ENCODE measurements at regions of chr5 and their contacts with region 1.

Region 1: GRCh38 chr5:142699184-142699720 is 13.4 kb upstream of the FGF1 start:
- DNase-seq: peak; percentile 60 to 74 (median 66)
- H3K4me3 ChIP-seq: no peak overlapping the region
- H3K4me3 Mint-ChIP-seq: no peak overlapping the region
- H3K27ac ChIP-seq: no peak overlapping the region
- H3K27ac Mint-ChIP-seq: no peak overlapping the region
- H3K4me1 ChIP-seq: no peaks in the 10 kb centered on the region
- H3K4me1 Mint-ChIP-seq: peaks cover 2% of the 10 kb centered on the region
- H3K27me3 ChIP-seq: no peaks in the 10 kb centered on the region
- H3K27me3 Mint-ChIP-seq: peaks cover 0 to 14% (median 2%) of the 10 kb centered on the region in 3 donors
- CTCF ChIP-seq: peak; percentile 90

Region 2: DNA sequence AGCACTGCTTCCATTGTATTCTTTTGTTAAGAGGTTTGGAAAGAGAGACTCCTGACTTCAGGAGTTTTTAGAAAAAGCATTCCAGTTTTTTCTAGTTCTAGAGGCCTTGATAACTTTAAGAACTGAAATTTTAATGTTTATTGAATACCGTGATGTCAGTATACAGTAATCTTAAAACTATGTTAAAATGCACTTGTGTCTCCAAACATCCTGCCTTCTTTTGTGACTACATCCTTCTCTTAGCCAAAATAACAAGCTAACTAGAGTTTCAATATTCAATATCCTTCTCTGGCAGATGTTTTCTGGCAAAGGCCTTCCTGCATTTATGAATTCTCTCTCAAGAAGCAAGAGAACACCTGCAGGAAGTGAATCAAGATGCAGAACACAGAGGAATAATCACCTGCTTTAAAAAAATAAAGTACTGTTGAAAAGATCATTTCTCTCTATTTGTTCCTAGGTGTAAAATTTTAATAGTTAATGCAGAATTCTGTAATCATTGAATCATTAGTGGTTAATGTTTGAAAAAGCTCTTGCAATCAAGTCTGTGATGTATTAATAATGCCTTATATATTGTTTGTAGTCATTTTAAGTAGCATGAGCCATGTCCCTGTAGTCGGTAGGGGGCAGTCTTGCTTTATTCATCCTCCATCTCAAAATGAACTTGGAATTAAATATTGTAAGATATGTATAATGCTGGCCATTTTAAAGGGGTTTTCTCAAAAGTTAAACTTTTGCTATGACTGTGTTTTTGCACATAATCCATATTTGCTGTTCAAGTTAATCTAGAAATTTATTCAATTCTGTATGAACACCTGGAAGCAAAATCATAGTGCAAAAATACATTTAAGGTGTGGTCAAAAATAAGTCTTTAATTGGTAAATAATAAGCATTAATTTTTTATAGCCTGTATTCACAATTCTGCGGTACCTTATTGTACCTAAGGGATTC is 547.5 kb before region 1 on chr5:
- intact Hi-C with region 1: loop called (anchors 10 kb)
- DNase-seq: peak; percentile 27 to 48 (median 42)
- H3K4me3 ChIP-seq: no peak overlapping the region
- H3K4me3 Mint-ChIP-seq: no peak overlapping the region
- H3K27ac ChIP-seq: no peak overlapping the region
- H3K27ac Mint-ChIP-seq: no peak overlapping the region
- H3K4me1 ChIP-seq: no peaks in the 10 kb centered on the region
- H3K4me1 Mint-ChIP-seq: no peaks in the 10 kb centered on the region
- H3K27me3 ChIP-seq: no peaks in the 10 kb centered on the region
- H3K27me3 Mint-ChIP-seq: no peaks in the 10 kb centered on the region
- CTCF ChIP-seq: peak; percentile 86

Region 3: GRCh38 chr5:142611154-142611553 is 88.1 kb before region 1 on chr5:
- intact Hi-C with region 1: loop called in 1 of 2 experiments (anchors 5 kb)
- DNase-seq: peak in 2 of 3 donors; percentile 8 to 23
- H3K4me3 ChIP-seq: no peak overlapping the region
- H3K4me3 Mint-ChIP-seq: no peak overlapping the region
- H3K27ac ChIP-seq: no peak overlapping the region
- H3K27ac Mint-ChIP-seq: no peak overlapping the region
- H3K4me1 ChIP-seq: no peaks in the 10 kb centered on the region
- H3K4me1 Mint-ChIP-seq: no peaks in the 10 kb centered on the region
- H3K27me3 ChIP-seq: peaks cover 0 to 4% of the 10 kb centered on the region in 2 donors
- H3K27me3 Mint-ChIP-seq: peaks cover 9 to 23% (median 17%) of the 10 kb centered on the region in 3 donors
- CTCF ChIP-seq: peak; percentile 82

Region 4: GRCh38 chr5:142655339-142656267 is 43.6 kb before region 1 on chr5:
- intact Hi-C with region 1: loop called in 1 of 2 experiments (anchors 5 kb)
- DNase-seq: peak; percentile 33 to 57 (median 51)
- H3K4me3 ChIP-seq: no peak overlapping the region
- H3K4me3 Mint-ChIP-seq: no peak overlapping the region
- H3K27ac ChIP-seq: no peak overlapping the region
- H3K27ac Mint-ChIP-seq: no peak overlapping the region
- H3K4me1 ChIP-seq: no peaks in the 10 kb centered on the region
- H3K4me1 Mint-ChIP-seq: no peaks in the 10 kb centered on the region
- H3K27me3 ChIP-seq: peaks cover 3 to 10% of the 10 kb centered on the region in 2 donors
- H3K27me3 Mint-ChIP-seq: peaks cover 6 to 18% (median 15%) of the 10 kb centered on the region in 3 donors
- CTCF ChIP-seq: peak; percentile 98

Region 5: GRCh38 chr5:142713121-142713706 is 14.0 kb after region 1 on chr5:
- intact Hi-C with region 1: no loop called
- DNase-seq: peak; percentile 80 to 83 (median 81)
- H3K4me3 ChIP-seq: peak overlapping the region; percentile 36 to 75 (median 71)
- H3K4me3 Mint-ChIP-seq: peak overlapping the region; percentile 78 to 82
- H3K27ac ChIP-seq: peak overlapping the region in 1 of 2 donors; percentile 39
- H3K27ac Mint-ChIP-seq: peak overlapping the region in 6 of 7 donors; percentile 10 to 86 (median 74)
- H3K4me1 ChIP-seq: peaks cover 6 to 17% of the 10 kb centered on the region in 2 donors
- H3K4me1 Mint-ChIP-seq: peaks cover 17% of the 10 kb centered on the region
- H3K27me3 ChIP-seq: no peaks in the 10 kb centered on the region
- H3K27me3 Mint-ChIP-seq: peaks cover 3 to 5% (median 3%) of the 10 kb centered on the region in 3 donors
- CTCF ChIP-seq: peak; percentile 99

Measured in CD14-positive monocyte (primary cell).